ENCODE measurements at regions of chr2 and their contacts with region 1.

Region 1: GRCh38 chr2:113203901-113204519 is 30.2 kb downstream of the PSD4 start:
- DNase-seq: peak in 2 of 3 donors; percentile 81
- ATAC-seq: peak; percentile 75
- H3K4me3 ChIP-seq: no peak overlapping the region
- H3K4me1 ChIP-seq: peaks cover 13% of the 10 kb centered on the region
- CTCF ChIP-seq: peak; percentile 78

Region 2: GRCh38 chr2:113089916-113090315 is 114.1 kb before region 1 on chr2:
- intact Hi-C with region 1: no loop called
- DNase-seq: no peak
- ATAC-seq: no peak
- H3K4me3 ChIP-seq: no peak overlapping the region
- H3K4me1 ChIP-seq: no peaks in the 10 kb centered on the region
- CTCF ChIP-seq: no peak

Region 3: GRCh38 chr2:113240150-113240862 is 36.3 kb after region 1 on chr2:
- intact Hi-C with region 1: loop called in 1 of 2 experiments (anchors 5 kb)
- DNase-seq: peak; percentile 73 to 86 (median 74)
- ATAC-seq: peak; percentile 16
- H3K4me3 ChIP-seq: no peak overlapping the region
- H3K4me1 ChIP-seq: no peaks in the 10 kb centered on the region
- CTCF ChIP-seq: no peak

Measured in mucosa of descending colon (tissue), 3 donors.